ENCODE measurements at regions of chr5 and their contacts with region 1.

Region 1: DNA sequence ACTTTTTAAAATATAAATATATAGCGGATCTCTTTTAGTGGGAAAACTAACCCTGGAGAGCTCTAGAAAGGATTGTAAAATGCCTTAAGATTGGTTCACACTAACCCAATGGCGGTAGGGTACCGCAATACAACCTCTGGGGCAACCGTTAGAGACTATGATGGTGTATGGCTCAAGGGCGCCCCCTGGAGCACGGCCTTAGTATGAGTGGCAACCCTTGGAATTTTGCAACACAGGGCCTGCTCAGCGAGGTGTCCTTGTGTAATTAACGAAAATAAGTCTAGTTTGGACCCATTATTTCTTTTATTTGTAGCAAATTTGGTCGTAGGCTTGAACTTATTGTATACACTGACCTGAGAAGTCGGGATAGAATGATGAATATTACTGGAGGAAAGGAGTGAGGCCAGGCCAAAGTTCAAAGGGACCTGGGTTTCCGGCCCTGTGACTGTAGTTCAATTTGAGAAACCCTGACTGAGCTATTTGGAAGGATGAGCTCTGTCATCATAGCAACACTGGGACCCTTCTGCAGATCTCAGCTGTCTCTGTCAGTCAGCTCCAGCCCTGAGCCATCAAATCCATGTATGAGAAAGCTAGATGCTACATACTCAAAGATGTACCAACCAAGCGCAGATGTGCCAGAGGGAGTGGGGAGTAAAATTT is 54.8 kb downstream of the CAMK4 start:
- DNase-seq: peak; percentile 79 to 93 (median 86)
- ATAC-seq: peak; percentile 98
- H3K4me3 ChIP-seq: no peak overlapping the region
- H3K4me3 Mint-ChIP-seq: peak overlapping the region; percentile 63
- H3K27ac ChIP-seq: no peak overlapping the region
- H3K27ac Mint-ChIP-seq: peak overlapping the region; percentile 59
- H3K4me1 ChIP-seq: peaks cover 11% of the 10 kb centered on the region
- H3K4me1 Mint-ChIP-seq: peaks cover 87% of the 10 kb centered on the region
- H3K27me3 ChIP-seq: no peaks in the 10 kb centered on the region
- H3K27me3 Mint-ChIP-seq: no peaks in the 10 kb centered on the region
- CTCF ChIP-seq: peak; percentile 85

Region 2: DNA sequence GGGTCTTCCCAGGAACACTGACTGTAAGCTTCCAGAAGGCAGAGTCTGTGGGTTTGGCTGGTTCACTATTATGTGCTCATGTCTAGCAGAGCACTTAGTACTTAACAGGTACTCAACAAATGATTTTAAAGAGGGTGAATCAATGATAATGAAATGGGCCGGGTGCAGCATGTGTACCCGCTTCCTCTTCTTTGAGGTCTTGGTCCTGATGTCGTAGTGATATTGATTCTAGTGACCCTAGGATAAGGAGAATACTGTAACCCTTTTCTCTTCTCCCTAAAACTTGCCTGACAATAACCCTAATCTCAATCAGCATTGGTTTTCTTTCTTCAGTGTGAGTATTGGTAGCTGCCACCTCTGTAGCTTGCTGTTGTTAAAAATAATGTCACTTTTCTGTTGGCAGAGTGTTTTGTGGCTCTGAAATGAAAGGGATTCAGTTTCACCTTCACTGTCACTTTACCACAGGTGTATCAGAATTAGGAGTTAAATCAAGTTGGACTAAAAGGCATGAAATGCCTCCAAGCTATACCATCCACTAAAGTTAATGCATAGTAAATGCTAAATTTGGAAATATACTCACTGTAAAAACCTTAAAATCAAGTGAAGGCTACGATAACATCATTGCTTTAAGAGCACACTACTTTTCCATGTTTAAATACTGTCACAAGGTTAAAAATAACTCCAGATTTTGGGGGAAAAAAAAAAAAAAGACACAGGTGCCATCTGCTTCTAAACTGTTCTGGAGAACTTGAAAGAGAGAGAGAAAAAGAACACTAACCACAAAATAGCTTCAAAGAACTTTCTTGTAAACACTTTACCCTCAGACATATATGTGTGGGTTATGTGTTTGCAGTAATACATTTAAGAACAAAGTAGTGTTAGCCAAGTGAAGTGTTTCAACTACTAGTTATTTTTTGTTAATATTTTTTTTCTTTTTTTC is 48.8 kb before region 1 on chr5:
- CTCF ChIA-PET with region 1: interaction called, 53 read pairs
- POLR2A ChIA-PET with region 1: interaction called, 42 read pairs
- intact Hi-C with region 1: no loop called
- DNase-seq: peak in 3 of 14 experiments; percentile 72 to 86 (median 80)
- ATAC-seq: peak; percentile 36
- H3K4me3 ChIP-seq: peak overlapping the region; percentile 96
- H3K4me3 Mint-ChIP-seq: peak overlapping the region; percentile 79
- H3K27ac ChIP-seq: peak overlapping the region; percentile 79
- H3K27ac Mint-ChIP-seq: peak overlapping the region; percentile 90
- H3K4me1 ChIP-seq: peaks cover 47% of the 10 kb centered on the region
- H3K4me1 Mint-ChIP-seq: peaks cover 86% of the 10 kb centered on the region
- H3K27me3 ChIP-seq: no peaks in the 10 kb centered on the region
- H3K27me3 Mint-ChIP-seq: no peaks in the 10 kb centered on the region
- CTCF ChIP-seq: no peak

Region 3: GRCh38 chr5:111254613-111255012 is 24.4 kb before region 1 on chr5:
- CTCF ChIA-PET with region 1: interaction called, 31 read pairs
- POLR2A ChIA-PET with region 1: interaction called, 3 read pairs
- intact Hi-C with region 1: no loop called
- DNase-seq: peak in 9 of 14 experiments; percentile 17 to 93 (median 51)
- ATAC-seq: peak; percentile 80
- H3K4me3 ChIP-seq: no peak overlapping the region
- H3K4me3 Mint-ChIP-seq: peak overlapping the region; percentile 72
- H3K27ac ChIP-seq: peak overlapping the region; percentile 62 to 68
- H3K27ac Mint-ChIP-seq: peak overlapping the region; percentile 87
- H3K4me1 ChIP-seq: peaks cover 44% of the 10 kb centered on the region
- H3K4me1 Mint-ChIP-seq: peaks cover 67% of the 10 kb centered on the region
- H3K27me3 ChIP-seq: no peaks in the 10 kb centered on the region
- H3K27me3 Mint-ChIP-seq: no peaks in the 10 kb centered on the region
- CTCF ChIP-seq: no peak

Region 4: GRCh38 chr5:111379391-111379816 is 100.4 kb after region 1 on chr5:
- CTCF ChIA-PET with region 1: no interaction called
- POLR2A ChIA-PET with region 1: no interaction called
- intact Hi-C with region 1: loop called in 1 of 2 experiments (anchors 10 kb)
- DNase-seq: no peak
- ATAC-seq: no peak
- H3K4me3 ChIP-seq: no peak overlapping the region
- H3K4me3 Mint-ChIP-seq: no peak overlapping the region
- H3K27ac ChIP-seq: no peak overlapping the region
- H3K27ac Mint-ChIP-seq: no peak overlapping the region
- H3K4me1 ChIP-seq: no peaks in the 10 kb centered on the region
- H3K4me1 Mint-ChIP-seq: peaks cover 62% of the 10 kb centered on the region
- H3K27me3 ChIP-seq: no peaks in the 10 kb centered on the region
- H3K27me3 Mint-ChIP-seq: no peaks in the 10 kb centered on the region
- CTCF ChIP-seq: no peak

Measured in CD4-positive, alpha-beta T cell (primary cell).